Mammary epithelial cell (primary cell): ENCODE measurements at regions of chr1 and their contacts with region 1.

Region 1: GRCh38 chr1:94316836-94317789 is 79.7 kb upstream of the ARHGAP29 start:
- DNase-seq: peak; percentile 52
- H3K4me3 ChIP-seq: no peak overlapping the region
- H3K27ac ChIP-seq: no peak overlapping the region
- H3K4me1 ChIP-seq: peaks cover 13% of the 10 kb centered on the region
- H3K27me3 ChIP-seq: no peaks in the 10 kb centered on the region
- CTCF ChIP-seq: no peak

Region 2: GRCh38 chr1:94230920-94231319 is 86.2 kb before region 1 on chr1:
- CTCF ChIA-PET with region 1: no interaction called
- dilution Hi-C with region 1: no loop called
- in situ Hi-C with region 1: loop called in 1 of 2 experiments (anchors 5 kb)
- intact Hi-C with region 1: no loop called
- DNase-seq: no peak
- H3K4me3 ChIP-seq: peak overlapping the region in 2 of 3 experiments; percentile 1 to 15
- H3K27ac ChIP-seq: peak overlapping the region; percentile 41
- H3K4me1 ChIP-seq: peaks cover 27% of the 10 kb centered on the region
- H3K27me3 ChIP-seq: no peaks in the 10 kb centered on the region
- CTCF ChIP-seq: no peak